ENCODE measurements at regions of chr22 and their contacts with region 1.

Region 1: DNA sequence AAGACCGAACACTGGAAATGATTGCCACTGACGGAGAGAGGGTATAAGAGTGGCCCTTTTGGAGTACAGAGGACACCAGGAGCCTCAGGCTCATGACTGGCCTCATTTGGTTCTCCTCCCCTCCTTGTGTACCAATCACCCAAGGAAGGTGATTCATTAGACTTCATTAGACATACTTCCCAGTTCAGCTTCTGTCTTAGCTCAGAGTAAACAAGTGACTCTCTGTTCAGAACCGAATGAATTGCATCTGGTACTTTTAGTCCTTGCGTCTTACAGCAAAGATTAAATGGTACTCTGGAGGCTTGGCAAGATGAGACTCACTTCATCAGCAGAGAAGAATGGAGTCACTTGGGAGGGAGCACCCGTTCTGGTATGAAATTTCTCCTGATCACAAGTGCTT is 75.2 kb downstream of the ZNRF3 start:
- DNase-seq: no peak
- ATAC-seq: no peak
- H3K4me3 ChIP-seq: no peak overlapping the region
- H3K27ac ChIP-seq: no peak overlapping the region
- H3K4me1 ChIP-seq: peaks cover 18% of the 10 kb centered on the region
- H3K27me3 ChIP-seq: peaks cover 0 to 2% of the 10 kb centered on the region in 2 experiments; a peak in 1 of 4 replicates
- CTCF ChIP-seq: no peak
- EP300 ChIP-seq: no peak
- POLR2A ChIP-seq: no peak
- RAD21 ChIP-seq: no peak

Region 2: GRCh38 chr22:28923826-28924732 is 34.5 kb before region 1 on chr22:
- CTCF ChIA-PET with region 1: no interaction called
- POLR2A ChIA-PET with region 1: interaction called, 3 read pairs
- RAD21 ChIA-PET with region 1: interaction called, 4 read pairs
- SMC1A ChIA-PET with region 1: interaction called, 13 read pairs
- in situ Hi-C with region 1: no loop called
- intact Hi-C with region 1: no loop called
- DNase-seq: no peak
- ATAC-seq: no peak
- H3K4me3 ChIP-seq: no peak overlapping the region
- H3K27ac ChIP-seq: no peak overlapping the region
- H3K4me1 ChIP-seq: peaks cover 8% of the 10 kb centered on the region
- H3K27me3 ChIP-seq: 0 out of 4 replicates have a peak, but pooled peaks cover 0 to 1% of the 10 kb centered on the region in 2 experiments
- CTCF ChIP-seq: no peak
- EP300 ChIP-seq: no peak
- POLR2A ChIP-seq: no peak
- RAD21 ChIP-seq: no peak

Region 3: GRCh38 chr22:28943501-28943879 is 15.1 kb before region 1 on chr22:
- CTCF ChIA-PET with region 1: interaction called, 5 read pairs
- POLR2A ChIA-PET with region 1: interaction called, 4 read pairs
- RAD21 ChIA-PET with region 1: interaction called, 4 read pairs
- SMC1A ChIA-PET with region 1: interaction called, 20 read pairs
- in situ Hi-C with region 1: no loop called
- intact Hi-C with region 1: no loop called
- DNase-seq: no peak
- ATAC-seq: no peak
- H3K4me3 ChIP-seq: no peak overlapping the region
- H3K27ac ChIP-seq: no peak overlapping the region
- H3K4me1 ChIP-seq: no peaks in the 10 kb centered on the region
- H3K27me3 ChIP-seq: no peaks in the 10 kb centered on the region
- CTCF ChIP-seq: no peak
- EP300 ChIP-seq: no peak
- POLR2A ChIP-seq: no peak
- RAD21 ChIP-seq: no peak

Region 4: GRCh38 chr22:28978158-28978557 is 19.5 kb after region 1 on chr22:
- CTCF ChIA-PET with region 1: interaction called, 8 read pairs
- POLR2A ChIA-PET with region 1: interaction called, 4 read pairs
- RAD21 ChIA-PET with region 1: interaction called, 4 read pairs
- SMC1A ChIA-PET with region 1: interaction called, 17 read pairs
- in situ Hi-C with region 1: no loop called
- intact Hi-C with region 1: no loop called
- DNase-seq: no peak
- ATAC-seq: peak; percentile 57
- H3K4me3 ChIP-seq: no peak overlapping the region
- H3K27ac ChIP-seq: no peak overlapping the region
- H3K4me1 ChIP-seq: no peaks in the 10 kb centered on the region
- H3K27me3 ChIP-seq: 0 out of 4 replicates have a peak, but pooled peaks cover 0 to 5% of the 10 kb centered on the region in 2 experiments
- CTCF ChIP-seq: no peak
- EP300 ChIP-seq: no peak
- POLR2A ChIP-seq: no peak
- RAD21 ChIP-seq: no peak

Region 5: DNA sequence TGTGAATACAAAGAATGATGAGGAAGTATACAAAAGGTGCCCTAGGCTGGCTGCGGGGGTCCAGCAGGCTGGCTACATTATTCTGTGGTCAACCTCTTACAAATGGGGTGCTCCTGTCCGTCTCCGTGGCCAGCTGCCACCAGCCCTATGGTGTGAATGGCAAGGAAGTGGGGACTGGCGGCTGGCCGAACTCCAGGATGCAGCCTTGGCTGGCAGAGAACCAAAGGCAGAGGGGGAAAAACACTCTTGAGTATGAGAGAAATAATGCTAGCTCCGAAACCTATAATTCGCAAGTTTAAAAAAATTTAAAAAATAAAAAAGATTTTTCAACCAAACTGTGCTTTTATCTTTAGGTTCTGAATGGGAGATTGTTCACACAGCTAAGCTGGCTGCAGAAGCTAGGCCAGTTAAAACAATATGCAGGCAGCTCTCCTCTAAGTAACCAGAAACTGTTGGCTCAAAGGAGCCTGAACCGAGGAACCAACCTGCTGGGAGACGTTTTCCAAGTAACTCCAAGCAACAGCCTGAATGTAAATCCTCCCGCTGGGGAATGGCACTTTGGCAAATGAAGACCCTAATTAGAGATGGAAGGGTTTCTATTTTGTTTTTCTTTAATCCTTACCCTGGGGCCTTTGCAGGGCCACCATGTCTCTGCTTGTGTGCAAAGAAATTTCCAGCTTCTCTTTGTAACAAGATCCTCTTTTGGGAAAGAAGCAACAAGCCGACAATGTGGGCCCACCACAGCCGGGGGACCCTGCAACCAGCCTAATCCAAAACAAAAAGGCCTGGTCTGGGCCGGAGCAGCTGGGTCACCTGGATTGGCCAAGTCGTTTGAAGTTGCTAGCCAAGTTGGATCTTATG is 52.9 kb after region 1 on chr22:
- CTCF ChIA-PET with region 1: interaction called, 3 read pairs
- POLR2A ChIA-PET with region 1: no interaction called
- RAD21 ChIA-PET with region 1: interaction called, 16 read pairs
- SMC1A ChIA-PET with region 1: interaction called, 5 read pairs
- in situ Hi-C with region 1: no loop called
- intact Hi-C with region 1: no loop called
- DNase-seq: no peak
- ATAC-seq: no peak
- H3K4me3 ChIP-seq: no peak overlapping the region
- H3K27ac ChIP-seq: no peak overlapping the region
- H3K4me1 ChIP-seq: no peaks in the 10 kb centered on the region
- H3K27me3 ChIP-seq: 0 out of 4 replicates have a peak, but pooled peaks cover 0 to 2% of the 10 kb centered on the region in 2 experiments
- CTCF ChIP-seq: no peak
- EP300 ChIP-seq: no peak
- POLR2A ChIP-seq: no peak
- RAD21 ChIP-seq: no peak

Measured in GM12878 (cell line).